ENCODE measurements at regions of chr15 and their contacts with region 1.

Region 1: DNA sequence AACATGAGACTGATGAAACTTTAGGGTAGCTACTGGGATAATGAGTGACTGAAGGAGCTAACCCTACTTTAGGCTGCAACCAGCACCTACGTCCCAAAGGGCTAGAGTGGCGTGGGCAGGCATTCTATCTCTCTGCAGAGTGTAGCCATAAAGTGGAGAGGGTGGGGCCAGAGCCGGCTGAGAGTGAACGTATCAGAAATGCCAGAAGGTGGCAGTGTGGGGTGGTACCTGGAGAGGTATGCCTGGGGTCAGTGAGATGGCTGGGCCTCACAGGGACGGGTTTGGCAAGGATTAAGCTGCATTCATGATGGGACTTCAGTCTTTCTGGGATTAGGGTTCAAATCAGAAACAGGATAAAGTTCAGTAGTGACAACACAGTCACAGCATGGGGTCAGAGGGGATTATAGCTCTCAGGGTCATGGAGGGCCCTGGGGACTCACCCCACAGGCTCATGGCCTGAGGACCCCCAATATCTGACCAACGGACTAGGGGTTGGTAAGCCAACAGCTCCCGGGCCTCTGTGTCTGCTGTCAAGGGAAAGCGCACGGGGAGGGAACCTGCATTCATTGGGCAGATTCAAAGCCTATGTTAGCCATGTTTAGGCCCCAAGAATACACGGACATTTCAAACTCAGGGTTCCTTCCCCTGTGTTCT is 86.5 kb upstream of the FOXB1 start:
- DNase-seq: peak; percentile 86
- H3K4me3 Mint-ChIP-seq: no peak overlapping the region
- H3K27ac Mint-ChIP-seq: no peak overlapping the region
- H3K4me1 Mint-ChIP-seq: peaks cover 28% of the 10 kb centered on the region
- H3K27me3 Mint-ChIP-seq: peaks cover 3% of the 10 kb centered on the region

Region 2: GRCh38 chr15:59725172-59725486 is 192.5 kb before region 1 on chr15:
- CTCF ChIA-PET with region 1: interaction called, 17 read pairs
- intact Hi-C with region 1: loop called (anchors 1 kb)
- DNase-seq: no peak
- H3K4me3 Mint-ChIP-seq: no peak overlapping the region
- H3K27ac Mint-ChIP-seq: no peak overlapping the region
- H3K4me1 Mint-ChIP-seq: no peaks in the 10 kb centered on the region
- H3K27me3 Mint-ChIP-seq: no peaks in the 10 kb centered on the region

Region 3: GRCh38 chr15:59966262-59966661 is 48.6 kb after region 1 on chr15:
- CTCF ChIA-PET with region 1: interaction called, 13 read pairs
- intact Hi-C with region 1: loop called (anchors 1 kb)
- DNase-seq: no peak
- H3K4me3 Mint-ChIP-seq: no peak overlapping the region
- H3K27ac Mint-ChIP-seq: no peak overlapping the region
- H3K4me1 Mint-ChIP-seq: peaks cover 14% of the 10 kb centered on the region
- H3K27me3 Mint-ChIP-seq: no peaks in the 10 kb centered on the region

Region 4: GRCh38 chr15:60091165-60091564 is 173.5 kb after region 1 on chr15:
- CTCF ChIA-PET with region 1: no interaction called
- intact Hi-C with region 1: no loop called
- DNase-seq: no peak
- H3K4me3 Mint-ChIP-seq: no peak overlapping the region
- H3K27ac Mint-ChIP-seq: no peak overlapping the region
- H3K4me1 Mint-ChIP-seq: no peaks in the 10 kb centered on the region
- H3K27me3 Mint-ChIP-seq: peaks cover 7% of the 10 kb centered on the region

Region 5: DNA sequence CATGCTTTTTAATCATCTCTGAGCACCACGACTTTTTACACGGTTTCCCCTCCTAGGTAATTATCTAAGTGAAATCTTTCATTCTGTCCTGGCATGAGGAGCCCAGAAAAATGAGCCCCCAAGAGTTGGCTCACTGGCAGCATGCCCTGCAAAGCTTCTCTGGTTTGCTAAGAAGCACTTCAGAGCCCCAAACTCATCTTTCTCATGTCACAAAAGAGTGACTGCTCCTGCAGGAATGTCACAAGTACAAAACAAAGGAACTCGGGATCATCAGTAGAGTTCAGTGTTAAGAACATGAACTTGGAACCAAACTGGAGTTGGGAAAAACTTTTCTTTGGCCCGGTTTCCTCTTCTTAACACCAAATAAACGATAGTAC is 210.4 kb after region 1 on chr15:
- CTCF ChIA-PET with region 1: interaction called, 11 read pairs
- intact Hi-C with region 1: loop called (anchors 1 kb)
- DNase-seq: no peak
- H3K4me3 Mint-ChIP-seq: peak overlapping the region; percentile 59
- H3K27ac Mint-ChIP-seq: peak overlapping the region; percentile 56
- H3K4me1 Mint-ChIP-seq: peaks cover 40% of the 10 kb centered on the region
- H3K27me3 Mint-ChIP-seq: no peaks in the 10 kb centered on the region

Region 6: DNA sequence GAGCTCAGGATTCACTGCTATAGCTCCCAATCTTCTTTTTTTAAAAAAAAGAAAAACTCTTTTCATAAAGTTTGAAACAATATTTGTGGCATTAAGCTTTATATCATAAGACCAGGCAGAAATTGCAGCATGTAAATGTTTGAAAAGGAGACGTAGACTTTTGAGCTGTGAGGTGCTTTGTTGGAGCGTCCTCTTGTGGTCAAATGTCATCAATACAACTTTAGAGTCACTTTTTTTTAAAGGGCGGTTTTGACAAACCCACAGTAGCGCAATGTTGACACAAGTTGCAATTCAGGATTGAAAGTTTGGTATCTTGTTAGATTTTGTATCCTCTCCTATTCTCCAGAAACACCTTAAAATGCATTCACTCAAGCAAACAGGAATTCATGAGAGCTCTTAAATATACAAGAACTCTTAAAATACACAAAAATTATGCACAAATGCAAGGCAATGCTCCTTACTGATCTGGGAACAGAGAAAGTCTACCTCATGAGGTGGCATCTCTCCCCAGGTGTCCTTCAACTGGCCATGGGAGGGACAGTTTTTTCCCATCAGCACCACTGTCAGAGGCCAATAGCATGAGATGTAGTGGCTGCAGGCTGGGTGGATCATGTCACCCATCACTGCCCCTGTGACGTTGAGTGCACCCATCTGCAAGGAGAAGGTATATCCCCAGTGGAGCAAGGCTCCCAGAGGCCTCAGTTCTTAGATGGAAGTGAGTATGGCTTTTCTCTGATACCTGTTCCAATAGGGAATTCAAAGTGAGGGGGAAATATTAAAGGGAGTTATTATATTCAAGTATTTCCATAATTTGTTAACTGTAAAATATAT is 409.4 kb after region 1 on chr15:
- CTCF ChIA-PET with region 1: interaction called, 44 read pairs
- intact Hi-C with region 1: loop called (anchors 1 kb)
- DNase-seq: peak; percentile 54
- H3K4me3 Mint-ChIP-seq: no peak overlapping the region
- H3K27ac Mint-ChIP-seq: no peak overlapping the region
- H3K4me1 Mint-ChIP-seq: peaks cover 2% of the 10 kb centered on the region
- H3K27me3 Mint-ChIP-seq: peaks cover 20% of the 10 kb centered on the region

Region 7: GRCh38 chr15:61780278-61780980 is 1862.8 kb after region 1 on chr15:
- CTCF ChIA-PET with region 1: no interaction called
- intact Hi-C with region 1: no loop called
- DNase-seq: no peak
- H3K4me3 Mint-ChIP-seq: no peak overlapping the region
- H3K27ac Mint-ChIP-seq: no peak overlapping the region
- H3K4me1 Mint-ChIP-seq: no peaks in the 10 kb centered on the region
- H3K27me3 Mint-ChIP-seq: peaks cover 27% of the 10 kb centered on the region